GM12878 (cell line): ENCODE measurements at regions of chr5 and their contacts with region 1.

Region 1: GRCh38 chr5:69492391-69492922 is at the start of gene OCLN:
- DNase-seq: no peak
- ATAC-seq: peak; percentile 80
- H3K4me3 ChIP-seq: peak within 1 kb of the TSS; percentile 97
- H3K27ac ChIP-seq: peak within 1 kb of the TSS; percentile 57
- H3K4me1 ChIP-seq: peaks cover 7% of the 10 kb centered on the region; the same call in 1 of the 2 replicates
- H3K27me3 ChIP-seq: no peaks in the 10 kb centered on the region; a peak in 1 of 4 replicates
- CTCF ChIP-seq: no peak
- EP300 ChIP-seq: no peak
- POLR2A ChIP-seq: peak; percentile 81
- RAD21 ChIP-seq: 0 out of 2 replicates have a peak, but pooled peaks have one; percentile 0
- polyA plus RNA-seq, gene OCLN: 4.7 to 8.9 TPM

Region 2: GRCh38 chr5:69414885-69415583 is 77.4 kb before region 1 on chr5 and contains the start of gene MARVELD2:
- CTCF ChIA-PET with region 1: no interaction called
- POLR2A ChIA-PET with region 1: no interaction called
- RAD21 ChIA-PET with region 1: no interaction called
- SMC1A ChIA-PET with region 1: no interaction called
- in situ Hi-C with region 1: no loop called
- intact Hi-C with region 1: loop called (anchors 5 kb)
- DNase-seq: no peak
- ATAC-seq: peak; percentile 96
- H3K4me3 ChIP-seq: peak within 1 kb of the TSS; percentile 75
- H3K27ac ChIP-seq: peak within 1 kb of the TSS; percentile 16
- H3K4me1 ChIP-seq: 0 out of 2 replicates have a peak, but pooled peaks cover 2% of the 10 kb centered on the region
- H3K27me3 ChIP-seq: no peaks in the 10 kb centered on the region
- CTCF ChIP-seq: peak; percentile 26 to 41 (median 36); a peak in 3 of 6 replicates
- EP300 ChIP-seq: no peak
- POLR2A ChIP-seq: no peak; the same call in none of the 2 replicates
- RAD21 ChIP-seq: peak; percentile 55
- polyA plus RNA-seq, gene MARVELD2: 2.3 to 3.5 TPM

Region 3: DNA sequence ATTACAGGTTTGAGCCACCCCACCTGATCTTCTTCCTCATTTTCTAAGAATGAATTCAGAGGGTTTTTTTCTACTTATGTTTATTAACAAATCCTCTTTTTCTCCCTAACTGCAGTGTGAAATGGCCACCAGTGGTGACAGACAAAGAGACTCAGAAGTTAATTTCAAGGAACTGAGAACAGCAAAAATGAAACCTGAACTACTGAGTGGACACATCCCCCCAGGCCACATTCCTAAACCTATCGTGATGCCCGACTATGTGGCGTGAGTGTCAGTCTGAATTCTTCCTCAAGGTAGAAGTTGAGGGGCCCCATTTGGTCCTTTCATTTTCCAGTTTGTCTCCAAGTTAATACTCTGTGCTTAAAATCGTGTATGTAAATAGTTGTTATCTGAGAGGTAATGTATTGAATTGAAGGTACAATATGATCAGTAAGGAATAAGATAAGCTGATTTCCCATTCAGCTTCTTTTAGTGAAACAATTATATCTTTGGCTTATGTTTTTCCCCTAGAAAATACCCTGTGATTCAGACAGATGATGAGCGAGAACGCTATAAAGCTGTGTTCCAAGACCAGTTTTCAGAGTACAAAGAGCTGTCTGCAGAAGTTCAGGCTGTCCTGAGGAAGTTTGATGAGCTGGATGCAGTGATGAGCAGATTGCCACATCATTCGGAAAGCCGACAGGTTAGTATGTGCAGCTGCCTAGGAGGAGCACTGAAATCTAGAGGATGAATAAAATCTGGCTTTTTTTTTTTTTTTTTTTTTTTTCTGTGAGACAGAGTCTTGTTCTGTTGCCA is 59.8 kb before region 1 on chr5:
- CTCF ChIA-PET with region 1: interaction called, 3 read pairs
- POLR2A ChIA-PET with region 1: interaction called, 4 read pairs
- RAD21 ChIA-PET with region 1: interaction called, 4 read pairs
- SMC1A ChIA-PET with region 1: no interaction called
- in situ Hi-C with region 1: no loop called
- intact Hi-C with region 1: loop called (anchors 2 kb)
- DNase-seq: peak; percentile 64
- ATAC-seq: peak; percentile 90
- H3K4me3 ChIP-seq: peak overlapping the region; percentile 31
- H3K27ac ChIP-seq: peak overlapping the region; percentile 76
- H3K4me1 ChIP-seq: peaks cover 9% of the 10 kb centered on the region; the same call in 1 of the 2 replicates
- H3K27me3 ChIP-seq: no peaks in the 10 kb centered on the region
- CTCF ChIP-seq: no peak
- EP300 ChIP-seq: peak in 1 of 2 experiments; percentile 68; a peak in 2 of 4 replicates
- POLR2A ChIP-seq: no peak
- RAD21 ChIP-seq: peak; percentile 30; the same call in 1 of the 2 replicates